Caco-2 (cell line): ENCODE measurements at regions of chr14 and their contacts with region 1.

Region 1: GRCh38 chr14:55059333-55059732 is 7.9 kb downstream of the MAPK1IP1L start:
- DNase-seq: no peak
- H3K4me3 ChIP-seq: no peak overlapping the region
- H3K4me3 Mint-ChIP-seq: no peak overlapping the region
- H3K27ac Mint-ChIP-seq: no peak overlapping the region
- H3K4me1 ChIP-seq: no peaks in the 10 kb centered on the region
- H3K4me1 Mint-ChIP-seq: peaks cover 5% of the 10 kb centered on the region
- H3K27me3 ChIP-seq: no peaks in the 10 kb centered on the region
- H3K27me3 Mint-ChIP-seq: no peaks in the 10 kb centered on the region
- CTCF ChIP-seq: no peak

Region 2: DNA sequence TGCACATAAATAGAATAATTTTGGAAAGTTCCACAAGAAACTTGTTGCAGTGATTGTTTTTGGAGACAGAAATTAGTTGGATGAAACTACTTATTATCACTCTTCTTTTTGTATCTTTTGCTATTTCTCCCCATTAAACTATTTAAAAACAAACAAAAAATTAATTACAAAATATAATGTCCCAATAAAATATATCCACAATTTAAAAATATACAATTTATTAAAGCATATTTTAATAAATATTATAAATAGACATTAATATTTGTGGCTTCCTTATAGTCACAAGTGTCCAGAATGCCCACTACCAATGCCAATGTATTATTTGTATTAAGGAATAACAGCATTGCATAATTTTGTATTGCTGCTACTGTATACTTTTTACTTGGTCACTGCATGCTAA is 104.2 kb before region 1 on chr14:
- CTCF ChIA-PET with region 1: no interaction called
- POLR2A ChIA-PET with region 1: no interaction called
- intact Hi-C with region 1: no loop called
- DNase-seq: no peak
- H3K4me3 ChIP-seq: no peak overlapping the region
- H3K4me3 Mint-ChIP-seq: no peak overlapping the region
- H3K27ac Mint-ChIP-seq: no peak overlapping the region
- H3K4me1 ChIP-seq: no peaks in the 10 kb centered on the region
- H3K4me1 Mint-ChIP-seq: no peaks in the 10 kb centered on the region
- H3K27me3 ChIP-seq: no peaks in the 10 kb centered on the region
- H3K27me3 Mint-ChIP-seq: no peaks in the 10 kb centered on the region
- CTCF ChIP-seq: no peak

Region 3: GRCh38 chr14:55084401-55085059 is 25.2 kb after region 1 on chr14:
- CTCF ChIA-PET with region 1: no interaction called
- POLR2A ChIA-PET with region 1: interaction called, 13 read pairs
- intact Hi-C with region 1: no loop called
- DNase-seq: no peak
- H3K4me3 ChIP-seq: no peak overlapping the region
- H3K4me3 Mint-ChIP-seq: no peak overlapping the region
- H3K27ac Mint-ChIP-seq: no peak overlapping the region
- H3K4me1 ChIP-seq: no peaks in the 10 kb centered on the region
- H3K4me1 Mint-ChIP-seq: no peaks in the 10 kb centered on the region
- H3K27me3 ChIP-seq: no peaks in the 10 kb centered on the region
- H3K27me3 Mint-ChIP-seq: no peaks in the 10 kb centered on the region
- CTCF ChIP-seq: no peak

Region 4: GRCh38 chr14:55802986-55803872 is 743.9 kb after region 1 on chr14:
- CTCF ChIA-PET with region 1: no interaction called
- POLR2A ChIA-PET with region 1: no interaction called
- intact Hi-C with region 1: no loop called
- DNase-seq: no peak
- H3K4me3 ChIP-seq: no peak overlapping the region
- H3K4me3 Mint-ChIP-seq: no peak overlapping the region
- H3K27ac Mint-ChIP-seq: no peak overlapping the region
- H3K4me1 ChIP-seq: peaks cover 10% of the 10 kb centered on the region; the same call in 1 of the 2 replicates
- H3K4me1 Mint-ChIP-seq: no peaks in the 10 kb centered on the region
- H3K27me3 ChIP-seq: no peaks in the 10 kb centered on the region
- H3K27me3 Mint-ChIP-seq: no peaks in the 10 kb centered on the region
- CTCF ChIP-seq: peak in 1 of 2 experiments; percentile 17